ENCODE measurements at regions of chr7 and their contacts with region 1.

Region 1: GRCh38 chr7:92447345-92448204 is at the start of gene GATAD1:
- DNase-seq: peak; percentile 93
- H3K4me3 ChIP-seq: peak within 1 kb of the TSS; percentile 94
- H3K27ac ChIP-seq: peak within 1 kb of the TSS; percentile 98
- H3K4me1 ChIP-seq: peaks cover 12% of the 10 kb centered on the region
- H3K27me3 ChIP-seq: no peaks in the 10 kb centered on the region
- CTCF ChIP-seq: peak; percentile 96
- total RNA-seq, gene GATAD1: 22.9 to 28.8 TPM

Region 2: GRCh38 chr7:92134271-92135051 is 313.1 kb before region 1 on chr7 and contains the start of gene CYP51A1:
- intact Hi-C with region 1: loop called (anchors 5 kb)
- DNase-seq: peak; percentile 98
- H3K4me3 ChIP-seq: peak within 1 kb of the TSS; percentile 97
- H3K27ac ChIP-seq: peak within 1 kb of the TSS; percentile 92
- H3K4me1 ChIP-seq: no peaks in the 10 kb centered on the region
- H3K27me3 ChIP-seq: no peaks in the 10 kb centered on the region
- CTCF ChIP-seq: no peak
- total RNA-seq, gene CYP51A1: 125 to 322 TPM

Region 3: DNA sequence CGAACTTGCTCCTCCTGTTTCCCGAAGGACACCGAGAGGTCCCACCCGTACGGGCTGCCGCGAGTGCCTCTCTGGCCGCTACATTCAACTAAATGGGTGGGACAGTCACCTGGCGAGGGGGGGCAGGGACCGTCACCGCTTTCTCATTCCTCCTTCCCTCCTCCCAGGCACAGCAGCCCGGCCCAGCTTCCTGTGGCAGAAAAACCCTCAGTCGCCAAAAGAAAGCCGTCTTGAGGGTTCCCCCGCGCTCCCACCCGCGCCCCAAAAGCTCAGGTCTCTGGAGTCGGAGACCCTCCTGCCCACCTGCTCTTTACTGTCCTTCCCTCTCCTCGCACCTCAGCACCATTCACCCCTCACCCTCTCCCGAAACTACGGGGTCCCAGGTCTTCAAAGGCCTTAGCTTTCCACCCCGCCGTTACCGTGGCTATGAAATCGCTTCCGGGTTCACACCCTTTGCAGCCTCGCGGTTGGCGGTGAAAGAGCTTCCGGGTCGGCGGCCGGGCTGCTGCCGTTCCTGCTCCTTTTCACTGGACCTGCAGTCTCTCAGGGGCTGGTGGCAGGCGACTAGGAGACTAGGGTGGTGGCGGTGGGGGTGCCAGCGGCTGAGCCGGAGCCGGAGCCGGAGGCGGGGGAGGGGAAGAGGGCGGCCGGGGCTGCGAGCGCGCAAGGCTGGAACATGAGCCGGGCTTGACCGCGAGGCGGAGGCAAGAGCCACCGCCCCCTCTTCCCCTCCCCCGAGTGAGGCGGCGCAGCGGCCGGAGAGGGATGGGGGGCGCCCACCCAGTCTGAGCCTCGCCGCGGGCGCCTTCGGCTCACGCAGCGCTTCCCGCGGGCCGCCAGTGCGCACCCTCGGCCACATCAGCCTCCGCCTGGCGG is 201.8 kb before region 1 on chr7 and contains the starts of genes ANKIB1 and KRIT1:
- intact Hi-C with region 1: loop called (anchors 10 kb)
- DNase-seq: peak; percentile 90
- H3K4me3 ChIP-seq: peak within 1 kb of the TSS; percentile 82
- H3K27ac ChIP-seq: peak within 1 kb of the TSS; percentile 94
- H3K4me1 ChIP-seq: peaks cover 10% of the 10 kb centered on the region
- H3K27me3 ChIP-seq: no peaks in the 10 kb centered on the region
- CTCF ChIP-seq: no peak
- total RNA-seq, gene ANKIB1: 38.9 to 41.5 TPM
- total RNA-seq, gene KRIT1: 27.4 to 27.5 TPM

Region 4: DNA sequence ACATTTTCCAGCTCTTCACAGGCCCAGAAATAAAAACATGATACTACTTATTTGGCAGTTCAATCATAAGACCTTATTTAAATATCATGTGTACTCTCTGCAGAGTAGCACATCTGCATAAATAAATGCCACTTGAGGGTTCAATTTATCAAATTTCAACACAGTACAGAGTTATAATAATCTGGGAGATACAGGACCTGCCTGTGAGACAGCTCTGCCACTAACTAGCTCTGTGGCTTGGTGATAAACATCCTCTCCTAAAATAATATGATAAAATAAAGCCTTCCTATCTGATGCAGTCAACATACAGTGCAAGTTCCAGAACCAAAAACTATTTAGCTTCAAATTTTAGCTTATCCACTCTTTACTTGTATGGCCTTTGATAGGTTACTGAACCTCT is 91.2 kb before region 1 on chr7:
- intact Hi-C with region 1: no loop called
- DNase-seq: no peak
- H3K4me3 ChIP-seq: no peak overlapping the region
- H3K27ac ChIP-seq: no peak overlapping the region
- H3K4me1 ChIP-seq: no peaks in the 10 kb centered on the region
- H3K27me3 ChIP-seq: no peaks in the 10 kb centered on the region
- CTCF ChIP-seq: no peak

Region 5: GRCh38 chr7:92391071-92391470 is 56.5 kb before region 1 on chr7:
- intact Hi-C with region 1: no loop called
- DNase-seq: no peak
- H3K4me3 ChIP-seq: no peak overlapping the region
- H3K27ac ChIP-seq: no peak overlapping the region
- H3K4me1 ChIP-seq: no peaks in the 10 kb centered on the region
- H3K27me3 ChIP-seq: no peaks in the 10 kb centered on the region
- CTCF ChIP-seq: no peak

Region 6: GRCh38 chr7:92641921-92642511 is 194.4 kb after region 1 on chr7:
- intact Hi-C with region 1: no loop called
- DNase-seq: no peak
- H3K4me3 ChIP-seq: no peak overlapping the region
- H3K27ac ChIP-seq: no peak overlapping the region
- H3K4me1 ChIP-seq: peaks cover 15% of the 10 kb centered on the region
- H3K27me3 ChIP-seq: no peaks in the 10 kb centered on the region
- CTCF ChIP-seq: no peak

Measured in colonic mucosa (tissue), 4 donors.